GM12878 (cell line): ENCODE measurements at regions of chr3 and their contacts with region 1.

Region 1: DNA sequence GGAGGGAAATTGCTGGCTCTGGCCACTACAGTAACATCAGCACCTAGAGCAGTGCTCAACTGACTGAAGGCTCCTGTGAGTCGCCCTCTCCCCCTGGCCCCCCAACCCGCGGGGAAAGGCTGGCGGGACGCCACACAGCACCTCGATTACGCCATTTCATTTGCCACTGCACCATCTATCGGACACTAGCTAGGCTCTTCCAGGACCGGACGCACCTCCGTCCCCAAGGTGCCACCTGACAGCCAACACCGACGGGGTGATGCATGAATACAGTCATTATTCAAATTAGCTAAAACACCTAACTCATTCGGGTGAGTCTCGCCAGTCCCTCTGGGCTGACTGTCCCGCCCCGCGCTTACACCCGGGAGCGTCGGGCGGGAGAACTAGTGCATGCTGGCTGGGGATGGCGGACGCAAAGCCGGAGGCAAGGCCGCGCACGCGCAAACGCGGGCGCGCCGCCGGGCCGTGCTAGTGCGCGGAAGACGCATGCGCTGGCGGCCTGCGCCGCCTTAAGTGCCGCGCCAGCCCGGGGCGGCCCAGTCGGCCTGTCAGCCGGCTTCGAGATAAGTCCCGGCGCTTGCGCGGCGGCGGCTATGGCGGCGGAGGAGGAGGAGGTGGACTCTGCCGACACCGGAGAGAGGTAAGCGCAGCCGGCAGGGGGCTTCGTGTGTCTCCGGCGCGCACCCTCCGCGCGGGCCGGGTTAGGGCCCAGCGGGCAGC is at the start of gene ABHD5:
- DNase-seq: peak; percentile 82
- ATAC-seq: peak; percentile 91
- H3K4me3 ChIP-seq: peak within 1 kb of the TSS; percentile 90
- H3K27ac ChIP-seq: peak within 1 kb of the TSS; percentile 47
- H3K4me1 ChIP-seq: 0 out of 2 replicates have a peak, but pooled peaks cover 8% of the 10 kb centered on the region
- H3K27me3 ChIP-seq: no peaks in the 10 kb centered on the region
- CTCF ChIP-seq: peak; percentile 20 to 37 (median 35); a peak in 3 of 6 replicates
- EP300 ChIP-seq: 0 out of 4 replicates have a peak, but pooled peaks of 1 of the 2 experiments have one; percentile 9
- POLR2A ChIP-seq: peak; percentile 99
- RAD21 ChIP-seq: 0 out of 2 replicates have a peak, but pooled peaks have one; percentile 7
- polyA plus RNA-seq, gene ABHD5: 5.5 to 6.8 TPM

Region 2: DNA sequence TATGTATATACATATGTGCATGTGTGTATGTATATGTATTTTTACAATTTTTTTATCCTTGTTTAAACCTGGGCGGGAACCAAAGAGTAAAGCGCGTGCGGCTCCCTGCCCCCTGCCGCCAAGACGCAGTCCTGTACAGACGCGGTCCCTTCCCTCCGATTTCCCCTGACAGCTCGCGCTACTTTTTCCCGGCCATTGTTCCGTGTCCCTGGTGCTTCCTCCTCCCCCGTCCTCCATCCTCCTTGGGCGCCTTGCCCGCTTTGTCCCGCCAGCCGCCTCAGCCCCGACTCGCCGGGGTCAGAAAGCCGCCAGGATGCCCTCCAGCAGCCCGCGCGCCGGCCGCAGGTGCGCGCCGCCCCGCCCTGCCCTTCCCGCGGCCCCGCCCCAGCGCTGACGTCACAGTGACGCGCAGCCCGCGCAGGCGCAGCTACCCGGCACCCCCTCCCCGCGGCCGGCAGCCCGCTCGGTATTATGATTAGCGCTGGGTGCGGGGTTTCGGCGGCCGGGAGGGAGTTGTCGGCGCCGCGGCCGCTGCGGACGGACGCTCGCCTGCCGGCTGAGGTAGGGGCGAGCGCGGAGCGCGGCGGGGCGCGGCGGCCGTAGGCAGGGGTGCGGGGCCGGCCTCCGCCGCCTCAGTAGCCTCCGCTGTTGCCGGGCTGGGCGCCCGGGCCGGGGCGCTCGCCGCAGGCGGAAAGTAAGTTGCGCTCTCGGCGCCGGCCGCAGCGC is 404.3 kb before region 1 on chr3 and contains the start of gene SNRK:
- CTCF ChIA-PET with region 1: no interaction called
- POLR2A ChIA-PET with region 1: no interaction called
- RAD21 ChIA-PET with region 1: no interaction called
- SMC1A ChIA-PET with region 1: no interaction called
- in situ Hi-C with region 1: no loop called
- intact Hi-C with region 1: no loop called
- DNase-seq: no peak
- ATAC-seq: peak; percentile 85
- H3K4me3 ChIP-seq: peak within 1 kb of the TSS; percentile 82
- H3K27ac ChIP-seq: peak within 1 kb of the TSS; percentile 68
- H3K4me1 ChIP-seq: peaks cover 11% of the 10 kb centered on the region
- H3K27me3 ChIP-seq: peaks cover 0 to 2% of the 10 kb centered on the region in 2 experiments; a peak in 1 of 4 replicates
- CTCF ChIP-seq: peak in 1 of 3 experiments; percentile 10; a peak in 2 of 6 replicates
- EP300 ChIP-seq: no peak
- POLR2A ChIP-seq: peak; percentile 68
- RAD21 ChIP-seq: no peak
- polyA plus RNA-seq, gene SNRK: 1.6 to 2.2 TPM

Region 3: GRCh38 chr3:43621656-43622432 is 68.7 kb before region 1 on chr3 and contains the start of gene ANO10:
- CTCF ChIA-PET with region 1: no interaction called
- POLR2A ChIA-PET with region 1: interaction called, 20 read pairs
- RAD21 ChIA-PET with region 1: no interaction called
- SMC1A ChIA-PET with region 1: no interaction called
- in situ Hi-C with region 1: no loop called
- intact Hi-C with region 1: no loop called
- DNase-seq: peak; percentile 88
- ATAC-seq: peak; percentile 96
- H3K4me3 ChIP-seq: peak within 1 kb of the TSS; percentile 64
- H3K27ac ChIP-seq: no peak within 1 kb of the TSS
- H3K4me1 ChIP-seq: no peaks in the 10 kb centered on the region
- H3K27me3 ChIP-seq: no peaks in the 10 kb centered on the region
- CTCF ChIP-seq: no peak
- EP300 ChIP-seq: no peak
- POLR2A ChIP-seq: no peak
- RAD21 ChIP-seq: no peak
- polyA plus RNA-seq, gene ANO10: 0.29 to 0.37 TPM

Region 4: DNA sequence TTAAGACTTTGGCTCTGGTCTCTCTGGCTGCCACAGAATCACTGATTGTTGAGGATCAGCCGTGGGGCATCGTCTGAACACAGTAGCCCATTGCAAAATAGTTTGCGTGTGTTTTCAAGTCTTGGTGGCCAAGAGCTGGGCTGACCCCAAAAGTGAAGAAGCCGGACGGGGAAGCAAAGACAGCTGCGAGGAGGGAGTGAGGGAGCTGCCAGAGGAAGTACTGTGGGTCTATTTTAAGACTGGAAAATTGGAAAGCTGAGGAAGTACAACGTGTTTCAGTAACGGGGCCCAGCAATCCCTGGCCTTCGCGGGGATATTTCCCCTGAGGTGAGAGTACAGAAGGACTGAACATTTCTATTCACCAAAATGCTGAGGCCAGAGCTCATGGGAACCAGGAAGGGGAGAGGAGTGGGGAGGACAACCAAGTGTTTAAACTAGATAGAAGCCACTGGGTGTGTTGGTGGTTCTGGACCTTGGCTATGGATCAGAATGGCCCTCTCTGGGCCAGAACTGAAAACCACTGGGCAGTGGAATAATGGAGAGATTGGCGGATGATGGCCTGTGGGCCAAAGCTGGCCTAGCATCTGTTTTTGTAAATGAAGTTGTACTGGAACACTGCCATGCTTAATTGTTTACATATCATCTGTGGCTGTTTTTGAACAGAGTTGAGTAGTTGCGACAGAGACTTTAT is 1869.9 kb after region 1 on chr3:
- CTCF ChIA-PET with region 1: no interaction called
- POLR2A ChIA-PET with region 1: no interaction called
- RAD21 ChIA-PET with region 1: no interaction called
- SMC1A ChIA-PET with region 1: no interaction called
- in situ Hi-C with region 1: no loop called
- intact Hi-C with region 1: no loop called
- DNase-seq: no peak
- ATAC-seq: no peak
- H3K4me3 ChIP-seq: no peak overlapping the region
- H3K27ac ChIP-seq: no peak overlapping the region
- H3K4me1 ChIP-seq: peaks cover 22% of the 10 kb centered on the region
- H3K27me3 ChIP-seq: no peaks in the 10 kb centered on the region
- CTCF ChIP-seq: no peak
- EP300 ChIP-seq: no peak
- POLR2A ChIP-seq: no peak
- RAD21 ChIP-seq: no peak